Transverse colon (tissue), 4 donors: ENCODE measurements at regions of chr12 and their contacts with region 1.

Region 1: DNA sequence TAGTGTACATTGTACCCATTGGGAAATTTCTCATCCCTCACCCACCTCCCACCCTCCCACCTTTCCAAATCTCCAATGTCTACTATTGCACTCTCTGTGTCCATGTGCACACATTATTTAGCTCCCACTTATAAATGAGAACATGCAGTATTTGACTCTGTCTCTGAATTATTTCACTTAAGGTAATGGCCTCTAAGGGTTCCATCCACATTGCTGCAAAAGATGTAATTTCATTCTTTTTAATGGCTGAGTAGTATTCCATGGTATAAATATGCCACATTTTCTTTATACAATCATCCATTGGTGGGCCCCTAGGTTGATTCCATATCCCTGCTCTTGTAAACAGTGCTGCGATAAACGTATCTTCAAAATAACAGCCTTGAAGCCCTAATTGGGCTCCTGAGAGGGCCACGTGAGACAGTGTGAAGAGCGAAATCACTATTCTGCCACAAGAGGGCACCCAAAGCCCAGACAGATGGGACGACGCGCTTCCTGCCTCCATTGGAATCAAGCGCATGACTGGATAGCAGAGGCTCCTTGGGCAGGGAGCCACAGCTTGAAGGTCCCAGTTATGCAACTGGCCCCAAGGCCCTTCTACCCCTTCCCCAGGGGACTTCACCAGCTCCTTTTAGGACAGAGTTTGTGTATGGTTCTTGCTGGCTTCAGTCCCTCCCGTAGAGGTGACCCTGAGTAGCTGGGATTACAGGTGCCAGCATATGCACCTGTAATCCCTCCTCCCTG is 21.3 kb upstream of the CD27 start:
- DNase-seq: peak; percentile 87
- H3K4me3 ChIP-seq: no peak overlapping the region
- H3K27ac ChIP-seq: peak overlapping the region; percentile 41 to 53 (median 46)
- H3K4me1 ChIP-seq: peaks cover 4 to 17% (median 11%) of the 10 kb centered on the region in 4 donors
- H3K27me3 ChIP-seq: no peaks in the 10 kb centered on the region
- CTCF ChIP-seq: peak; percentile 79 to 97 (median 88)
- EP300 ChIP-seq: no peak
- POLR2A ChIP-seq: no peak

Region 2: DNA sequence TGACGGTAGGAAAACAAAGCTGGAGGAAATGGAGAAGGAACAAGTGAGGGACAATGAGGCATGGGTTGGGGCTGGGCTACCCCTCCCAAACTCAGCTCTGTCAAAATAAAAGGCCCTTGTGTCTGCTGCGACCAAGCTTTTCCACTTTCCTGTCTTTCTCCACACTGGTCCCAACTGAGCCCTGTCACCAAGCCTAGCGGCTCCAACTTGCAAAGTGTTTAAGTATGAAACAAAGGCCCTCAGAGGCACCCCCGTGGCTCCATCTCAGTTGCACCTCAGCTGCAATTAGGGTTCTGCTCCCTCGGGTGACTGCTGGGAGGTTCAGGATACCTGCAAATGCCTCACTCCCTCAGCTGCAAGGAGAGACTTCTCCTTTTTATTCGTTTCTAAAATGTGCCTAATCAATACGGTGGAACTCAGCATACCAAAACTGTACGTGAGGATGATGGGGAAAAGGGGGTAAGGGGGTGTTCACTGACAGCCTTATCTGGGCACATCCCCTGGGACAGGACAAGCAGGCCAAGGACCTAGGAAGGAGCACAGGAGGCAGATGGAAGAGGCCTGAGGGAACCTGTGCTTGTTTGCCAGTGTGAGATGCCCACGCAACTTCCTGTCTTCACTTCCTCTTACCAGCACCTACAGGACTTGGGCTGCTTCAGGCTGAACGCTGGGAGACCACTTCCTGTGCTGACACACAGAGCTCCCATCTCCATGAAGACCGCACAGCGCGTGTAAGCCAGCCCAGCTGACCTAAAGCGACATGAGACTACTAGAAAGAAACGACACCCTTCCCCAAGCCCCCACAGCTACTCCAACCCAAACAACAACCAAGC is 38.2 kb after region 1 on chr12:
- in situ Hi-C with region 1: loop called in 1 of 4 experiments (anchors 5 kb)
- intact Hi-C with region 1: loop called (anchors 5 kb)
- DNase-seq: peak; percentile 80
- H3K4me3 ChIP-seq: no peak overlapping the region
- H3K27ac ChIP-seq: peak overlapping the region; percentile 59 to 82 (median 74)
- H3K4me1 ChIP-seq: peaks cover 0 to 39% (median 4%) of the 10 kb centered on the region in 4 donors
- H3K27me3 ChIP-seq: no peaks in the 10 kb centered on the region
- CTCF ChIP-seq: no peak
- EP300 ChIP-seq: no peak
- POLR2A ChIP-seq: no peak

Region 3: DNA sequence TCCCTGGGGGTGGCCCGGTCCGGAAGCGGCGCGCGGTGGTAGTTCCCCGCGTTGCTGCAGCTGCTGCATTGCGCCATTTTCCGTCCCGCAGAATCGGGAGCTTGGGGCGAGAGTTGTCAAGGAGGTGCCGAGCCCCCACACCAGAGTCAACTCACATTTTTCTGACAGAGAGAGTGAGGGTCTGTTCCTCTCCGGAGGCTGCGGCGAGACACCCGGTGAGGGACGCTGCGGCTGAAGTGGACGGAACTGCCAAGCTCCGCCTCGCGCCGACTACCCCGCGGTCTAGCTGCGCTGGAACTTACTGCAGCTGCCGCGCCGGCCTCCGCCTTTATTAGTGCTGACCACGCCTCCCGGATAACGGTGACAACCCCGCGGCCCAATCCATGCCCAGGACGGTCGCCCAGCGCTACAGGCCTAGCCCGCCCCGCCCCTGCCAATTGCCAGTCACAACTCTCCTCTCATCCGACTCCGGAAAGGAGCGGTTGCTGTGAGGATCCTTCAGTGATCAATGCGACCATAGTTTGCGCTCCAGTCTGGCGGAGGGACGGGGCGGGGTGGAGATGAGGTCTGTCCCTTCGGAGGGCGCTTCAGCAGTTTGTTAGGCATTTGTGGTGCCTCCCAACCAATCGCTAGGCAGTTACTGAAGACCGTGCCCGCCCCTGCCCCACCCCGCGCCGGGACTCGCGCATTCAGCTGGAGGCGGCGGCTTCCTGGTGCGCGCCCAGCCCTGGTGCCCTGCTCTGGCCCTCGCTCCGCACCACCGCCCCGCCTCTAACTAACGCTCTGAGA is 47.1 kb after region 1 on chr12 and contains the start of gene VAMP1:
- in situ Hi-C with region 1: loop called in 1 of 4 experiments (anchors 5 kb)
- intact Hi-C with region 1: no loop called
- DNase-seq: peak; percentile 98
- H3K4me3 ChIP-seq: peak within 1 kb of the TSS; percentile 49 to 78 (median 64)
- H3K27ac ChIP-seq: peak within 1 kb of the TSS; percentile 88 to 96 (median 90)
- H3K4me1 ChIP-seq: peaks cover 8 to 40% (median 33%) of the 10 kb centered on the region in 4 donors
- H3K27me3 ChIP-seq: no peaks in the 10 kb centered on the region
- CTCF ChIP-seq: peak in 1 of 5 experiments; percentile 36
- EP300 ChIP-seq: no peak
- POLR2A ChIP-seq: peak; percentile 99
- total RNA-seq, gene VAMP1: 2.6 to 23.1 (median 17.7) TPM

Region 4: GRCh38 chr12:6533923-6534694 is 110.7 kb after region 1 on chr12 and contains the start of gene GAPDH:
- in situ Hi-C with region 1: loop called in 1 of 4 experiments (anchors 25 kb)
- intact Hi-C with region 1: loop called (anchors 5 kb)
- DNase-seq: peak; percentile 94
- H3K4me3 ChIP-seq: peak within 1 kb of the TSS; percentile 72 to 88 (median 78)
- H3K27ac ChIP-seq: peak within 1 kb of the TSS; percentile 94 to 98 (median 98)
- H3K4me1 ChIP-seq: peaks cover 31 to 60% (median 42%) of the 10 kb centered on the region in 4 donors
- H3K27me3 ChIP-seq: no peaks in the 10 kb centered on the region
- CTCF ChIP-seq: no peak
- EP300 ChIP-seq: no peak
- POLR2A ChIP-seq: peak; percentile 99
- total RNA-seq, gene GAPDH: 1,806 to 2,946 (median 2,333) TPM

Region 5: GRCh38 chr12:6540181-6540877 is 116.9 kb after region 1 on chr12:
- in situ Hi-C with region 1: loop called in 3 of 4 experiments (anchors 5 to 25 kb)
- intact Hi-C with region 1: loop called (anchors 5 kb)
- DNase-seq: peak; percentile 96
- H3K4me3 ChIP-seq: peak overlapping the region in 2 of 4 donors; percentile 28 to 29
- H3K27ac ChIP-seq: peak overlapping the region; percentile 89 to 98 (median 96)
- H3K4me1 ChIP-seq: peaks cover 28 to 77% (median 59%) of the 10 kb centered on the region in 4 donors
- H3K27me3 ChIP-seq: no peaks in the 10 kb centered on the region
- CTCF ChIP-seq: no peak
- EP300 ChIP-seq: no peak
- POLR2A ChIP-seq: peak; percentile 77